ENCODE measurements at regions of chr17 and their contacts with region 1.

Region 1: DNA sequence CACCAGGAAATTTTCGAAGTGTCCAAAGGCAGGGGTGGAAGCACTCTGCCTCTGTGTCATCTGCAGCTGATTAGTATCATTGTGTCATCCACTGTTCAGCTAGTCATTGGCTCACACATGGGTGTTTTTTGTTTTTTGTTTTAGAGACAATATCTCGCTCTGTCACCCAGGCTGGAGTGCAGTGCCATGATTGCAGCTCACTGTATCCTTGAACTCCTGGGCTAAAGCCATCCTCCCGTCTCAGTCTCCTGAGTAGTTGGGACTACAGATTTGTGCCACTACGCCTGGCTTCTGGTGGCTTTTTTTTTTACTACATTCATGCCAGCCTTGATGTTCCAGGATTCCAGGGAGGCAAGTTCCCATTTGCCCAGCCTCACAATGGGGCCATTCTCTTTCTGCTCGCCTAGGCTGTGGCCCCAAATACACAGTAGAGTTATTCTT is 32.5 kb upstream of the MYO18A start:
- H3K4me3 Mint-ChIP-seq: peak overlapping the region; percentile 17
- H3K27ac Mint-ChIP-seq: peak overlapping the region; percentile 88
- H3K4me1 Mint-ChIP-seq: peaks cover 62% of the 10 kb centered on the region
- H3K27me3 Mint-ChIP-seq: no peaks in the 10 kb centered on the region

Region 2: GRCh38 chr17:29180034-29180787 is 32.5 kb before region 1 on chr17 and contains the start of gene MYO18A:
- intact Hi-C with region 1: loop called (anchors 5 kb)
- H3K4me3 Mint-ChIP-seq: peak within 1 kb of the TSS; percentile 78
- H3K27ac Mint-ChIP-seq: peak within 1 kb of the TSS; percentile 84
- H3K4me1 Mint-ChIP-seq: peaks cover 58% of the 10 kb centered on the region
- H3K27me3 Mint-ChIP-seq: peaks cover 11% of the 10 kb centered on the region

Measured in dendritic cell treated with granulocyte-macrophage colony-stimulating factor and Interleukin-4, amounts not matched to agents 40 ng/mL and 50 ng/mL, for 4 days (primary cell).